Heart left ventricle (tissue), 16 donors: ENCODE measurements at regions of chr4 and their contacts with region 1.

Region 1: DNA sequence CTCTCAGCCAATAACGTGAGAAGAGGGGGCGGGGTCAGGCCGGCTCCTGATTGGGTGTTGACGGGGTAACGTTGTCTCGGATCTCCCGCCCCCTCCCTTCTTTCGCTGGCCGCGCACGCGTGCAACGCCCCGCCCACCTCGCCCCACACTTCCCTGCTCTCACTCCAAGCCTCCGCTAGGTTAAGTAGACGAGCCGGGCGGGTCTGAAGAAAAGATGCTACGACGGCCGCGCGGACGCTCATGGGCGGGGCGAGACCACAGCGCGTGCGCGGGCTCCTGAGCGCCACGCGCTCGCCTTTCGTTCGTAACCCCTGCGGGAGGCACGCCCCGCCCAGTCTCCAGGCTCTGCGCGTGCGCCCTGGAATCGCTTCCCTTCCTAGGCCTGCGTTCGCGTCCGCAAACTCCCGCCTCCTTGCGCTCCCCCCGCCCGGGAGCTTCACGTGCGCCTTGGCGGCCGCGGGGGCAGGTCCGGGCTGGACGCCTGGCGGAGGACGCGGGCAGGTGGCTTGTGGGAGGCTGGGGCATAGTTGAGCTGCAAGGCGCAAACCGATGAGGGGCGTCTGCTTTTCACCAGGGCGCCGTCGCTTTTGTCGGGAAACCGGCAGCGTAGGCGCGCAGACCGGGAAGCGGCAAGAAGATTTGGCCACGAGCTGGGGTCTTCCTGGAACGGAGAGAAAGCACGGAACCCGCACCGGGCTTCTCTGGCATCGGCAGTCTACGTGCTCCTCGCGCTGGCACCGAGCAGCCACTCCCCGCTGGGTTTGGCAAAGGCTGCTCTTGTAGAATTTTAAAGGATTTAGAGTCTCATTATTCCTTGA is 467 bp upstream of the PGRMC2 start:
- DNase-seq: peak; percentile 99 to 100 (median 100)
- ATAC-seq: peak; percentile 93 to 96 (median 96)
- H3K4me3 ChIP-seq: peak overlapping the region; percentile 46 to 90 (median 77)
- H3K27ac ChIP-seq: peak overlapping the region; percentile 77 to 98 (median 94)
- H3K4me1 ChIP-seq: peaks cover 0 to 42% (median 27%) of the 10 kb centered on the region in 12 donors
- H3K27me3 ChIP-seq: no peaks in the 10 kb centered on the region
- CTCF ChIP-seq: peak in 8 of 12 donors; percentile 3 to 35 (median 12)
- POLR2A ChIP-seq: peak in 1 of 2 donors; percentile 81

Region 2: DNA sequence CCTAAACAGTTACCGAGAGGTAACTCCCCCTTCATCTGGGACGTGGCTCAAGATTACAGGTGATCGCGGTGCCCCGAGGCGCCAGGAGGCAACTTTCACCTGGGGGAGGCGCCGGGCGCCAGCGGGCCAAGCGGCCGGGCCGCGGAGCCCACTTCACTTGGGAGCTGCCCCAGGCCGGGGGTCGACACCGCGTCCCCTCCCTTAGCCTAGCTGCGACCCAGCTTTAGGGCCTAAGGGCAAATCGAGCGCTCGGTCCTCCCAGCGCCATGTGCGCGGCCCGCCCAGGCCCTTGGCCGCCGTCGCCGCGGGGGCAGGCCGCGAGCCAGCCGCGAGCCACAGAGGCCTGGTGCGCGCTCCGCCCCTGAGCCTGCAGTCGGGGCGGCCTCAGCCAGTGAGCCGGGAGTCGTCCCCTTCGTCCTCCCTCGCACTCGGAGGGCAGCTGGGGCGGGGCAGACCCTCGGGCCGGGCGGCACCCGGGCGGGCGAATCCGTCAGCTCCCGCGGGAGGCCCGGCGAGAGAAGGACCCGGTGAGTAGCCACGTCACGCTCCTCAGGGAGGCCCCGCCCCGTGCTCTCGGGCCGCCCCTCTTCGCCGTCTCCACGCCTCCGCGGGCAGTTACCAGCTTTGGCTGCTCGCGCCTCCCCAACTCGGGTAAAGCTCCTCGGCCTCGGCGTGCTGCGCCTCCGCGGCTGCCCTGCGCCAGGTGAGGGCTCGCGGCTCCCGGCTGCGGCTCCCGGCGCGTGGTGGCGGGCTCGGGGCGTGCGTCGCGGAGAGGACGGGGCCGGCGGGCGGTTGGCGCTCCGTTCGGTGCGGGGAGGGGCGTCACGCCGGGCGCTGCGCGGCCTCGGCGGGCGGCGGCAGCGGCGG is 227.1 kb before region 1 on chr4 and contains the start of gene LARP1B:
- intact Hi-C with region 1: loop called in 2 of 10 experiments (anchors 2 to 10 kb)
- DNase-seq: peak; percentile 95 to 98 (median 97)
- ATAC-seq: peak; percentile 97 to 98 (median 98)
- H3K4me3 ChIP-seq: peak within 1 kb of the TSS; percentile 70 to 92 (median 76)
- H3K27ac ChIP-seq: peak within 1 kb of the TSS; percentile 87 to 99 (median 97)
- H3K4me1 ChIP-seq: peaks cover 0 to 15% (median 4%) of the 10 kb centered on the region in 12 donors
- H3K27me3 ChIP-seq: no peaks in the 10 kb centered on the region
- CTCF ChIP-seq: no peak
- POLR2A ChIP-seq: peak; percentile 17 to 90
- total RNA-seq, gene LARP1B: 14.8 to 22.5 (median 18.0) TPM

Region 3: GRCh38 chr4:128130621-128131020 is 157.5 kb before region 1 on chr4:
- intact Hi-C with region 1: no loop called
- DNase-seq: no peak
- ATAC-seq: no peak
- H3K4me3 ChIP-seq: no peak overlapping the region
- H3K27ac ChIP-seq: no peak overlapping the region
- H3K4me1 ChIP-seq: no peaks in the 10 kb centered on the region
- H3K27me3 ChIP-seq: no peaks in the 10 kb centered on the region
- CTCF ChIP-seq: no peak
- POLR2A ChIP-seq: no peak

Region 4: GRCh38 chr4:128379860-128380259 is 91.8 kb after region 1 on chr4:
- intact Hi-C with region 1: loop called in 2 of 10 experiments (anchors 5 to 10 kb)
- DNase-seq: peak in 4 of 5 donors; percentile 35 to 66 (median 48)
- ATAC-seq: peak; percentile 55 to 86 (median 74)
- H3K4me3 ChIP-seq: no peak overlapping the region
- H3K27ac ChIP-seq: no peak overlapping the region
- H3K4me1 ChIP-seq: peaks cover 0 to 8% (median 0%) of the 10 kb centered on the region in 12 donors
- H3K27me3 ChIP-seq: no peaks in the 10 kb centered on the region
- CTCF ChIP-seq: peak; percentile 25 to 66 (median 49)
- POLR2A ChIP-seq: no peak

Region 5: DNA sequence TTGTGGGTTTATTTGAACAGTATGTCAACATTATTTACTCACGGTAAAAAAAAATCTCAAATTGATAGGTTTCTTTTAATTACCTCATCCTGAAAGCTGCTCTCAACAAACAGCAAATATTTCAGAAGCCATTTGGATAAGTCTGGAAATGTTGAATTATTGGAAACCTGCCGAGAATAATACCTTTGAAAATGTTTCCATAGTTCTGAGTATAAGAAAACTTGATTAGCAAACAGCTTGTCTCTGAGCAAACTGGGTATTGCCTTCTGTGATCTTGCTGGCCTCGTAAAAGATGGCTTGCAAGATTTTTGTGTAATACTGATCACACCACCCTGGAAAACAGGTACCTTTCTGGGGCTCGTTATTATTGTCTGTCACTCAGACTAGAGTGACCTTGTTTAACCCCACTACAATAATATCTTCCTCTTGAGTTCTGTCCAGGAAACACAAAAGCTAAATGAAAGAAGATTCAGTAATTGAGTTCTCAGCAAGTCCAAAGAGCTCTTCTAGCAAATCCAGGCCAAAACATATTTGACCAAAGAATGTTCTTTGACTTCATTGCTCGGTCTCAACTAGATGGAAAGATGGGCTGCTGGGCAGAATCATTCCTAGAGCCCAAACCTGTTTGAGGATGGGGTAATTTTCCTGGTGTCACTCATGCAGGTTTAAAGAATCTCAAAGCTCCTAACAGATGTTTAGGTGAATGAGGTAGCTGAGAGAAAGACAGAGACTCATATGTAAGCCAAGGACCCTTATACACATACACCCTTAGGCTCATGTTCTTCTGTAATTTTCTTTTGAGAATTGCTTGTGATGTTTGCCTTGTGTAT is 265.8 kb after region 1 on chr4:
- intact Hi-C with region 1: loop called in 1 of 10 experiments (anchors 5 kb)
- DNase-seq: no peak
- ATAC-seq: peak in 2 of 4 donors; percentile 30 to 37
- H3K4me3 ChIP-seq: peak overlapping the region; percentile 21 to 73 (median 58)
- H3K27ac ChIP-seq: peak overlapping the region; percentile 80 to 95 (median 88)
- H3K4me1 ChIP-seq: peaks cover 0 to 17% (median 12%) of the 10 kb centered on the region in 12 donors
- H3K27me3 ChIP-seq: no peaks in the 10 kb centered on the region
- CTCF ChIP-seq: no peak
- POLR2A ChIP-seq: no peak

Region 6: DNA sequence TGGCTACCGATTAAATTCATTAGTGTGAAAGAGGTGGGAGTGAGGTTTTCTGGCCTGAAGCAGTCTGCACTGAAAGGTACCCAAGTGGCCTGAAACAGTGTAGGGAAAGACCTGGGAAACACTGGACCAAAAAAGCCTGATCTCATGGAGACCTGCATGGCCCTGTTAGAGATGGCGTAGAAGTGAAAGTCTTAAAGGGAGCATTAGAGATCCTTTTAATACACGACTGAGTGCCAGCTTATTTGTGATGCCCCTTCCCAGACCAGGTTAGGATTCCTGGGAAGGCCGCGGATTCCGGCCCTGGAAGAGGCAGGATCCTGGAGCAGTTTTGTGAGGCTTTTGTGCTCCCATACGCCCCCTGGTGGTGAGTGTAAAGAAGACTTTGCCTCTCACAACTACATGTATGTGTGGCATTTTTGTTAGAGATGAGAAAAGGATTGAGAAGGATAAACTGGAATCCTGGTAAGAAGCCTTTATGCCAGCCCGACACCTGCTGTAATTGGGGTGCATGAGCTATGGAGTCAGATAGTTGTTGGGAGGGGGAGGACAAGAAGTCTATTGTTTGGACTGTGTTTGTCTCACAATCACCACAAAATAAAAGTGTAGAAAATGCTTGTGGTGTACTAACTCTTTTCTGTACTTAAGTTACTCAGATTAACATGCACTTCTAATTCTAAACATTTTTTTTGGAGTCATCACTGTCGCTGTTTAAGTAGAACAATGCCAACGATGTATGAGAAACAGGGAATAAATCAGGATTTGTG is 575.4 kb after region 1 on chr4:
- intact Hi-C with region 1: loop called in 2 of 10 experiments (anchors 10 kb)
- DNase-seq: peak; percentile 75 to 81 (median 76)
- ATAC-seq: peak in 3 of 4 donors; percentile 66 to 68 (median 67)
- H3K4me3 ChIP-seq: no peak overlapping the region
- H3K27ac ChIP-seq: peak overlapping the region in 4 of 12 donors; percentile 16 to 42 (median 24)
- H3K4me1 ChIP-seq: peaks cover 0 to 45% (median 28%) of the 10 kb centered on the region in 12 donors
- H3K27me3 ChIP-seq: no peaks in the 10 kb centered on the region
- CTCF ChIP-seq: peak; percentile 80 to 95 (median 90)
- POLR2A ChIP-seq: no peak